ENCODE measurements at regions of chr6 and their contacts with region 1.

Region 1: DNA sequence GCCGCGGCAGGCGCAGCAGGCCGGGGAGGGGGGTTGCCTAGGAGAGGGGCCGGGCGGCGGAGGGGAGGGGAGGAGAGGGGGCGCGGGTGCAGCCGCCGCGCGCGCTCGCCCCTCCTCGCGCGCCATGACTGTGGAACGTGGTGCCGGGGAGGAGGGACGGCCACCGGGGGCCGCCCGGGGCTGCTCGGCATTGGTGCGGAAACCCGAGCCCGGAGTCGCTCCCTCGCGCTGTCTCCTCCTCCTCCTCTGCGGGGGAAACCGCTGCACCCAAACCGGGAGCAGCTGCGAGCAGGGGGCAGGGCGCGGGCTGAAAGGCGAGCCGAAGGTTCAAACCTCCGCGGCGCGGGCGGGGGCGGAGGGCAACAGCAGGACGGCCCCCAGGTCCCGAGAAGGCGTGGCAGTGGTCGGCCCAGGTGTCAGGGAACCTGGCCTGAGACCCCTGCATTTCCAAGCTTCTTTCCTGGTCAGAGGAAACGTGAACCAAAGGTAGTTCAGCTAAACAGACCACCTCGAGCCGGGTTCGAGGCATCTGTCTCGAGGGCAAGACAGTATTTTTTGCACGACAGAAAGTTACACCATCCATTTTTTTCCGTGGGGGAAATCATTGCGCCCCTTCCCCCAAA is 1.4 kb upstream of the TRERF1 start:
- DNase-seq: peak; percentile 57 to 90 (median 75)
- ATAC-seq: peak; percentile 72
- H3K4me3 ChIP-seq: peak overlapping the region; percentile 96
- H3K4me3 Mint-ChIP-seq: peak overlapping the region; percentile 98
- H3K27ac ChIP-seq: peak overlapping the region in 1 of 2 donors; percentile 64
- H3K27ac Mint-ChIP-seq: peak overlapping the region; percentile 86
- H3K4me1 ChIP-seq: peaks cover 36% of the 10 kb centered on the region
- H3K4me1 Mint-ChIP-seq: peaks cover 51% of the 10 kb centered on the region
- H3K27me3 ChIP-seq: no peaks in the 10 kb centered on the region
- H3K27me3 Mint-ChIP-seq: no peaks in the 10 kb centered on the region
- CTCF ChIP-seq: no peak

Region 2: GRCh38 chr6:42367353-42368011 is 85.7 kb before region 1 on chr6:
- CTCF ChIA-PET with region 1: no interaction called
- POLR2A ChIA-PET with region 1: interaction called, 47 read pairs
- intact Hi-C with region 1: loop called in 1 of 2 experiments (anchors 5 kb)
- DNase-seq: peak in 6 of 14 experiments; percentile 4 to 74 (median 51)
- ATAC-seq: peak; percentile 57
- H3K4me3 ChIP-seq: peak overlapping the region; percentile 36
- H3K4me3 Mint-ChIP-seq: peak overlapping the region; percentile 84
- H3K27ac ChIP-seq: peak overlapping the region; percentile 71 to 74
- H3K27ac Mint-ChIP-seq: peak overlapping the region; percentile 94
- H3K4me1 ChIP-seq: peaks cover 67% of the 10 kb centered on the region
- H3K4me1 Mint-ChIP-seq: peaks cover 80% of the 10 kb centered on the region
- H3K27me3 ChIP-seq: no peaks in the 10 kb centered on the region
- H3K27me3 Mint-ChIP-seq: no peaks in the 10 kb centered on the region
- CTCF ChIP-seq: no peak

Region 3: GRCh38 chr6:42417641-42418112 is 35.5 kb before region 1 on chr6:
- CTCF ChIA-PET with region 1: interaction called, 4 read pairs
- POLR2A ChIA-PET with region 1: interaction called, 11 read pairs
- intact Hi-C with region 1: loop called in 1 of 2 experiments (anchors 5 kb)
- DNase-seq: peak in 13 of 14 experiments; percentile 12 to 80 (median 30)
- ATAC-seq: peak; percentile 89
- H3K4me3 ChIP-seq: no peak overlapping the region
- H3K4me3 Mint-ChIP-seq: peak overlapping the region; percentile 53
- H3K27ac ChIP-seq: no peak overlapping the region
- H3K27ac Mint-ChIP-seq: peak overlapping the region; percentile 72
- H3K4me1 ChIP-seq: peaks cover 37% of the 10 kb centered on the region
- H3K4me1 Mint-ChIP-seq: peaks cover 70% of the 10 kb centered on the region
- H3K27me3 ChIP-seq: no peaks in the 10 kb centered on the region
- H3K27me3 Mint-ChIP-seq: no peaks in the 10 kb centered on the region
- CTCF ChIP-seq: no peak

Region 4: GRCh38 chr6:42440778-42441696 is 12.1 kb before region 1 on chr6:
- CTCF ChIA-PET with region 1: interaction called, 4 read pairs
- POLR2A ChIA-PET with region 1: interaction called, 63 read pairs
- intact Hi-C with region 1: no loop called
- DNase-seq: peak in 3 of 14 experiments; percentile 30 to 44 (median 39)
- ATAC-seq: peak; percentile 48
- H3K4me3 ChIP-seq: peak overlapping the region; percentile 1
- H3K4me3 Mint-ChIP-seq: peak overlapping the region; percentile 71
- H3K27ac ChIP-seq: peak overlapping the region in 1 of 2 donors; percentile 4
- H3K27ac Mint-ChIP-seq: peak overlapping the region; percentile 84
- H3K4me1 ChIP-seq: peaks cover 58% of the 10 kb centered on the region
- H3K4me1 Mint-ChIP-seq: peaks cover 84% of the 10 kb centered on the region
- H3K27me3 ChIP-seq: no peaks in the 10 kb centered on the region
- H3K27me3 Mint-ChIP-seq: no peaks in the 10 kb centered on the region
- CTCF ChIP-seq: no peak